PC-3 (cell line): ENCODE measurements at regions of chr16 and their contacts with region 1.

Region 1: DNA sequence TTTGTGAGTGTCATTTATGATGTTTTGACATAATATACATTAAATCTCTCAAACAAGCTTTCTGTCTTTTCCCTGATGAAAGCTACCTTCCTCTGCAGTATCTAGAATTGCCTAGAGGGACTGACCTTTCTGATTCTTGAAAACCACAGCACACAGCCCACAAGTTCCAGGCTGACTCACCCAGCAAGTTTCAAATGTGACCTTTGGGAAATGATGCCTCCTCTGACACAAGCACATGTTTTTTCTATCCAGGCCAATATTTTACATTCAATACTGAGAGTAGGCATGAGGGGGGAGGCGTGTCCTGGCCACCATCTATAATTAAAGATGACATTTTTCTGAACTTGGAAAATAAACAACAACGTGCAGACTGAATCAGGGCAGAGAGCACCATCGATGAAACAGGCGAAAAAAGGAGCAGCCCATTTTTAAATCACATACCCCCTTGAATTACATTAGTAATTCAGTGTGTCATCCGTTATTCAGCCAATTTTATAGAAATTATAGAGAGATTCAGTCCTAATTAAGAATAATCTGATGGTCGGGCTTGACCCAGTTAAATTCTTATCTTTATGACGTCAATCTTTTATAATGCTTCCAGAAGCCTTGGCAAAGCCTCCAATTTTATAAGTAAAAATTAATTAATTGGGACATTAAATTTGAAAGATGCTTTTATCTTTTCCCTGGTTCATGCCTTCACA is 292.6 kb upstream of the CDH11 start:
- DNase-seq: peak; percentile 90
- ATAC-seq: peak; percentile 62
- H3K4me3 ChIP-seq: no peak overlapping the region; the same call in 1 of the 2 replicates
- H3K27ac ChIP-seq: peak overlapping the region; percentile 93
- H3K4me1 ChIP-seq: peaks cover 57% of the 10 kb centered on the region
- H3K27me3 ChIP-seq: no peaks in the 10 kb centered on the region
- CTCF ChIP-seq: no peak

Region 2: DNA sequence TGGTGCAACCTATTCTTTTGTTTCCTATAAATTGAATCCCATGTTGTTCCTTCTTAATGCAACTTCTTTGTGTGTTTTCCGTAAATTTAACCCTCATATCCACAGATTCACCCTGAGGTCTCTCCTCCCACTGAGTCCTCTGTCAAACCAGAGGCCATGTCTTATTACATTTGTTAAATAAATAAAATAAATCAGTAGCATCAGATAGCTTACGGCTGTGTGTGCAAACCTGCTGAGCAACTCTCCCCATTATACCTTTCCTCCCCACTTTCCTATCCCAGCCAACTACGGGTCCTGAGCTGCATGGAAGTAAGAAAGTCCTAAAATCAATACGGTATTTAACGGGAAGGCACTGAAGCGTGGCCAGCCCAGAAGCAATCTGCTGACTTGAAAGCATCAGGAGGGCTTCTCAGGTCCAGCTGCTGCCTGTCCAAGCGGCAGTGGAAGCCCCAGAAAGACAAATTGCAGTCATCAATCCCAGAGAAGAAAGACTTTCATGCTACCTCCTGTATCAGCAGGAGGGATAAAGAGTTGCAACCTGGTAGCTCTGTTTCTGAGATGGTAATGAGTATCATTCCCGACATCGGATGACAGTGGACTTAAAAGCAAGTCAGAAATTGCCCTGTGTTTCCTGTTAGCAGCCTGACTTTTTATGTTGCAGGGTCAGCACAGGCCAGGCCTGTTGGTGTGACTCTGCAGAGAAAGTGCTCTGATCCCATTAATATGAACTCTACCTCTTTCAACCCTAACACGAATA is 65.8 kb after region 1 on chr16:
- CTCF ChIA-PET with region 1: no interaction called
- POLR2A ChIA-PET with region 1: no interaction called
- intact Hi-C with region 1: no loop called
- DNase-seq: peak; percentile 17
- ATAC-seq: no peak
- H3K4me3 ChIP-seq: no peak overlapping the region
- H3K27ac ChIP-seq: no peak overlapping the region
- H3K4me1 ChIP-seq: peaks cover 22% of the 10 kb centered on the region
- H3K27me3 ChIP-seq: no peaks in the 10 kb centered on the region
- CTCF ChIP-seq: no peak

Region 3: GRCh38 chr16:65572156-65572555 is 157.7 kb after region 1 on chr16:
- CTCF ChIA-PET with region 1: no interaction called
- POLR2A ChIA-PET with region 1: no interaction called
- intact Hi-C with region 1: loop called (anchors 5 kb)
- DNase-seq: peak; percentile 72
- ATAC-seq: peak; percentile 96
- H3K4me3 ChIP-seq: no peak overlapping the region
- H3K27ac ChIP-seq: peak overlapping the region; percentile 25; the same call in 1 of the 2 replicates
- H3K4me1 ChIP-seq: peaks cover 15% of the 10 kb centered on the region
- H3K27me3 ChIP-seq: no peaks in the 10 kb centered on the region
- CTCF ChIP-seq: no peak

Region 4: DNA sequence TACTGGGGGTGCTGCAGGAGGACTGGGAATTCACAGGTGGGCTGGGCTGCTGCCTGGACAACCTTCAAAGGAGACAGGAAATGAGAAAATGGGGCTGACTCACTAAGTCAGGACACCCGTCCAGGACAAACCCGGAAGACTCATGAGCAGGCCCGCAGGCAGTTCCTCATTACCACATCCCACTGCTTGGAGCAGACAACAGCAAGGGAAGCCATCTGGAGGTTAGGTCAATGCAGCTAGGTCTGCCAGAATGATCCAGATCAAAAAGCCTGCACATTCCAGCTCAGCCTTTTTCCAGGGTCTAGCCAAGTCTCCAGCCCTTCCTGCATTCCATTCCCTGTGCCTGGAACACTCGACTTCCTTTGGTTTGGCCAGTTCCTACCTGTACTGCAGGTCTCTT is 243.9 kb after region 1 on chr16:
- CTCF ChIA-PET with region 1: no interaction called
- POLR2A ChIA-PET with region 1: no interaction called
- intact Hi-C with region 1: loop called (anchors 10 kb)
- DNase-seq: peak; percentile 92
- ATAC-seq: peak; percentile 80
- H3K4me3 ChIP-seq: peak overlapping the region; percentile 51
- H3K27ac ChIP-seq: peak overlapping the region; percentile 99
- H3K4me1 ChIP-seq: peaks cover 43% of the 10 kb centered on the region
- H3K27me3 ChIP-seq: no peaks in the 10 kb centered on the region
- CTCF ChIP-seq: no peak

Region 5: DNA sequence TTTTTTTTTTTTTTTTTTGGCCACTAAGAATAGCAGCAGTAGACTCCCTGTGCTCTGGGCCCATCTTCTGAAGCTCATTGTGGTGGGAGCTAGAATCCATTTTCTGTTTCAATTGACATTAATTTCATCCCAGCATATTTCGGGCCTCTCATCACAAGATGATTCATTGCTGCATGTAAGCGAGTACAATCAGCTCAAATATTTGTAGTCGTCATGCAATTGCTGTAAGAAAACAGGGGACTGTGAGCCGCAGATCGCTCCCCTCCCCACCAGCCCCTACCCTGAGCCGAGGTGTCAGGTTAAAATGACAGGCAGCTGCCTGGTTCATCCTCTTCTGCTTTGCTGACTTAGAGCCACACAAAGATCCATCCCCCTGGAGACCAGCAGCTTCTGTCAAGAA is 593.3 kb after region 1 on chr16:
- CTCF ChIA-PET with region 1: no interaction called
- POLR2A ChIA-PET with region 1: no interaction called
- intact Hi-C with region 1: loop called (anchors 10 kb)
- DNase-seq: peak; percentile 71
- ATAC-seq: peak; percentile 66
- H3K4me3 ChIP-seq: 0 out of 2 replicates have a peak overlapping the region, but pooled peaks have one; percentile 17
- H3K27ac ChIP-seq: no peak overlapping the region; the same call in 1 of the 2 replicates
- H3K4me1 ChIP-seq: peaks cover 22% of the 10 kb centered on the region
- H3K27me3 ChIP-seq: no peaks in the 10 kb centered on the region
- CTCF ChIP-seq: no peak

Region 6: DNA sequence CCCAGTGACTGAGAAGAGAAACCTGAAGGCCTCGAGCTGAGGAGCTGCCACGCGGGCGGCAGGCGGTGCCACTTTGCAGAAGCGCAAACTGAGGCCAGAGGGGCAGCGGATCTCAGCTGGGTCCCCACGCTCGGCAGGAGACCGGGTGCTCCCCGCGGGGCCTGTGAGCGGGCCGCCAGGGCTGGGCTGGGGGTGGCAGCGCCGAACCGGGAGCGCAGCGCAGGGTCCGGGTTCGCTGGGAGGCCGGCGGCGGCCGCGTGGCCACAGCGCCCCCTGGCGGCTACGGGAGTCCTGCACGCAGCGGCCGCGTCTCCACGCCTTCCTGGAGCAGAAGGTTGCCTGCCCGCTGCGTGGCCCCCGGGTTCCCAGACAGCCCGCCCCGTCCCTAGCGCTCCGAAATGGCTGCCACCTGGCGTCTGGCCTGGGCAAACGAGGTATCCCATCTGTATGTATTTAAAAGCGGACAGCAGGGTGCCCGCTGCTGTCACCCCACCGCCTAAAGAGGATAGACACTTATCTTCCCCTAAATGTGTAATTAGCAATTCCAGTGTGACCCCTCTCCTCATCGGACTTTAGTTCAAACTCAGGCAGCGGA is 856.0 kb after region 1 on chr16:
- CTCF ChIA-PET with region 1: no interaction called
- POLR2A ChIA-PET with region 1: no interaction called
- intact Hi-C with region 1: loop called (anchors 10 kb)
- DNase-seq: peak; percentile 70
- ATAC-seq: peak; percentile 68
- H3K4me3 ChIP-seq: peak overlapping the region; percentile 46; the same call in 1 of the 2 replicates
- H3K27ac ChIP-seq: peak overlapping the region; percentile 59
- H3K4me1 ChIP-seq: peaks cover 33% of the 10 kb centered on the region
- H3K27me3 ChIP-seq: no peaks in the 10 kb centered on the region
- CTCF ChIP-seq: peak; percentile 74